Gastrocnemius medialis (tissue), 4 donors: ENCODE measurements at regions of chr18 and their contacts with region 1.

Region 1: DNA sequence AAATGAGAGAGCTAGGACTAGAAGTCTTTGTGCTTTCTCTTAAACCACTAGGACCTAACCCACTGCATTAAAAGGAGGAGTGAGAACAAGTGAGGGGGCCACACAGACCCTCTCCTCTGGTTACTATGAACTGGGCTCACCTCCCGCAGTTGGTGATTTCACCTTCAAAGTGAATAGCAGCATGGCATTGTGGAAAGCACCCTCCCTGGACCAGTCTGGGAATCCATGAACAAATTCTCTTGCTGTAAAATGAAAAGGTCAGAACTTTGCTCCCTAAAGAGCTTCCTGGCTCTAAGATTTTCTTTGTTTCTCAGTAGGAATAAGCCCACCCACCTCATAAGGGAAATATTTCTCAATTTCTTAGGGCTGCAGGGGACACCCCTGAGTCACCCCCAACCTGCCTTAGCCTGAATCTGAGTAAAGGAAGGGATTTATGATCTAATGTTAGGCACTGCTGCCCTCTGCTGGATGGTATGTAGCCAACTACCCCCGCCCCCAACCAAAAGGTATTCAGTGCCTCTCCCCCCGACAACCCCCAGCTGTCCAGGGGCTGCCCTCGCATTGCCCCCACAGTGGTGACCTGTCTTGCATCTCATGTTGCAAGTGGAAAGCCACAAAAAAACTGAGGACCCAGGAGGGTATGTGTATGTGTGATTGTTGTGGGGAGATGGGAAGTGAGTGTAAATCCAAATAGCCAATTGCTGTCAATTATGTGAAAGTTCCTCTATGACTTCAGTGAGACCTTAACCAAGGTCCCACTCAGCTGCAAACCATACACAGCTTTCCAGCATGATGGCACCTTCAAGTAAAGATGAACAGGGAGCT is 230.9 kb upstream of the SLC14A2 start:
- DNase-seq: peak; percentile 25 to 51
- ATAC-seq: peak; percentile 74 to 85
- H3K4me3 ChIP-seq: no peak overlapping the region
- H3K27ac ChIP-seq: peak overlapping the region in 1 of 4 donors; percentile 18
- H3K4me1 ChIP-seq: peaks cover 9 to 23% of the 10 kb centered on the region in 2 donors
- H3K27me3 ChIP-seq: no peaks in the 10 kb centered on the region
- CTCF ChIP-seq: peak; percentile 71 to 87 (median 79)
- POLR2A ChIP-seq: no peak

Region 2: DNA sequence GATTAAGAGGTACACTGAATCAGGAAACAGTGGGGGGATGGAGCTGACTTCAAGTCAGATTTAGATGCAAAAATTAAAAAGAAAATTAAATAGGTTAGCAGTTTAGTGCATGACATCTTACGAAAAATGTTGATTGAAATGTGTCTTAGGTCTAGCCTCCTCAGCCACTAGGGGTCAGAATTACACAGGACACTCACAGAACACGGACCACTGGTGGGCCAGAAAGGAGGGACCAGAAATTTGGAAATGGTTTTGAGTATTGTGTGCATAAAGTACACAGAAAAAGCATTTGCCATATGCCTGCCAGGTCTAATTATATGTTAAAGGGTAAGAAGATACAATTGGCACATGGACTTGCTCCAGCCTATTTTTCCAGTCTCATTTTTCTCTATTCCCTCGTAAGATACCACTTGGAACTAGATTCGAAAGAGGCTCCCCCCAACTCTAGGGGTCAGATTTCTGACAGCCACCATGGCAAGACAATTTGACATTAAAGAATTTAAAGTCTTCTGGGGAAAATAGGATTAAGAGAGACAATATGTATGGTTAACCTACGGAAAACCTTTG is 1253.9 kb before region 1 on chr18:
- in situ Hi-C with region 1: loop called in 1 of 4 experiments (anchors 25 kb)
- intact Hi-C with region 1: no loop called
- DNase-seq: no peak
- ATAC-seq: no peak
- H3K4me3 ChIP-seq: no peak overlapping the region
- H3K27ac ChIP-seq: no peak overlapping the region
- H3K4me1 ChIP-seq: no peaks in the 10 kb centered on the region
- H3K27me3 ChIP-seq: no peaks in the 10 kb centered on the region
- CTCF ChIP-seq: peak; percentile 31 to 63 (median 50)
- POLR2A ChIP-seq: no peak

Region 3: GRCh38 chr18:44895176-44895798 is 489.1 kb before region 1 on chr18:
- in situ Hi-C with region 1: loop called in 1 of 4 experiments (anchors 25 kb)
- intact Hi-C with region 1: loop called (anchors 10 kb)
- DNase-seq: peak; percentile 32 to 69
- ATAC-seq: peak; percentile 85 to 97
- H3K4me3 ChIP-seq: no peak overlapping the region
- H3K27ac ChIP-seq: no peak overlapping the region
- H3K4me1 ChIP-seq: peaks cover 14 to 25% of the 10 kb centered on the region in 2 donors
- H3K27me3 ChIP-seq: no peaks in the 10 kb centered on the region
- CTCF ChIP-seq: peak; percentile 42 to 65 (median 54)
- POLR2A ChIP-seq: no peak

Region 4: GRCh38 chr18:45059695-45060094 is 324.7 kb before region 1 on chr18:
- in situ Hi-C with region 1: loop called in 1 of 4 experiments (anchors 25 kb)
- intact Hi-C with region 1: no loop called
- DNase-seq: no peak
- ATAC-seq: peak in 1 of 2 donors; percentile 50
- H3K4me3 ChIP-seq: no peak overlapping the region
- H3K27ac ChIP-seq: no peak overlapping the region
- H3K4me1 ChIP-seq: peaks cover 0 to 5% of the 10 kb centered on the region in 2 donors
- H3K27me3 ChIP-seq: no peaks in the 10 kb centered on the region
- CTCF ChIP-seq: no peak
- POLR2A ChIP-seq: no peak

Region 5: DNA sequence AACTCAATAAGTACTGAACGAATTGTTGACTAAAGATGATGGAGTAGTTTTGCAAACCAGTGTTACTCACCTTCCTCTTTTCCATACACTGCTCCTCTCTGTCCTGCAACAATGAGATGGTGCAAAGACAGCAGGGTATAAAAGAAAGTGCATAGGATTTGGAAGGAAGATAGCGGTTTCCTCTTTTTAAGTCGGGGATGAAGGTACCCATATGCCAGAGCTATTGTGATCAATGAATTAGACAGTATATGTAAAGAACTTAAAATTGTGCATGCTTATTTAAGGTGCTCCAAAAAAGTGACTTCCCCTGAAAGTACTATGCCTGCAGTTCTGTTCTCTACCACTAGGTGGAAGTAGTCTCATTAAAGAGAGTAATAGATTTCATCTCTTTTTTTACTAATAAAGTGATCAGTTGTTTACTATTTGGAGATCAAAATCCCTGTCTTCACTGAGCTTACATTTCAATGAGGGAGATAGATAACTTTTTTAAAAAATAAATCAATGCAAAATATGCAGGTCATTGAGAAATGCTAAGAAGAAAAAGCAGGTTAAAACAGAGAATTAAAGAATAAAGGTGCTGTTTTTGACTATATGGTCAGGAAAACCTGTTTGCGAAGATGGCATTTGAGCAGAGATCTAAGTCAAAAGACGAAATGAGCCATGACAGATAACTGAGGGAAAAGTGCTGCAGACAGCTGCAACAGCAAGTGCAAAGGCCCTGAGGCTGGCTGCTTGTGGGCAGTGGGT is 108.8 kb before region 1 on chr18:
- in situ Hi-C with region 1: loop called (anchors 5 to 10 kb)
- intact Hi-C with region 1: loop called (anchors 1 kb)
- DNase-seq: no peak
- ATAC-seq: no peak
- H3K4me3 ChIP-seq: no peak overlapping the region
- H3K27ac ChIP-seq: no peak overlapping the region
- H3K4me1 ChIP-seq: no peaks in the 10 kb centered on the region
- H3K27me3 ChIP-seq: no peaks in the 10 kb centered on the region
- CTCF ChIP-seq: peak; percentile 67 to 88 (median 79)
- POLR2A ChIP-seq: no peak

Region 6: GRCh38 chr18:45312555-45313126 is 71.7 kb before region 1 on chr18:
- in situ Hi-C with region 1: no loop called
- intact Hi-C with region 1: no loop called
- DNase-seq: no peak
- ATAC-seq: no peak
- H3K4me3 ChIP-seq: no peak overlapping the region
- H3K27ac ChIP-seq: no peak overlapping the region
- H3K4me1 ChIP-seq: no peaks in the 10 kb centered on the region
- H3K27me3 ChIP-seq: no peaks in the 10 kb centered on the region
- CTCF ChIP-seq: no peak
- POLR2A ChIP-seq: no peak